ENCODE measurements at regions of chr15 and their contacts with region 1.

Region 1: GRCh38 chr15:39580117-39580484 is 778 bp upstream of the THBS1 start:
- DNase-seq: peak; percentile 60 to 94
- H3K4me3 ChIP-seq: peak overlapping the region; percentile 70
- H3K27ac ChIP-seq: peak overlapping the region; percentile 62
- H3K4me1 ChIP-seq: peaks cover 22% of the 10 kb centered on the region; the same call in 1 of the 2 replicates
- H3K27me3 ChIP-seq: no peaks in the 10 kb centered on the region
- CTCF ChIP-seq: peak; percentile 86

Region 2: DNA sequence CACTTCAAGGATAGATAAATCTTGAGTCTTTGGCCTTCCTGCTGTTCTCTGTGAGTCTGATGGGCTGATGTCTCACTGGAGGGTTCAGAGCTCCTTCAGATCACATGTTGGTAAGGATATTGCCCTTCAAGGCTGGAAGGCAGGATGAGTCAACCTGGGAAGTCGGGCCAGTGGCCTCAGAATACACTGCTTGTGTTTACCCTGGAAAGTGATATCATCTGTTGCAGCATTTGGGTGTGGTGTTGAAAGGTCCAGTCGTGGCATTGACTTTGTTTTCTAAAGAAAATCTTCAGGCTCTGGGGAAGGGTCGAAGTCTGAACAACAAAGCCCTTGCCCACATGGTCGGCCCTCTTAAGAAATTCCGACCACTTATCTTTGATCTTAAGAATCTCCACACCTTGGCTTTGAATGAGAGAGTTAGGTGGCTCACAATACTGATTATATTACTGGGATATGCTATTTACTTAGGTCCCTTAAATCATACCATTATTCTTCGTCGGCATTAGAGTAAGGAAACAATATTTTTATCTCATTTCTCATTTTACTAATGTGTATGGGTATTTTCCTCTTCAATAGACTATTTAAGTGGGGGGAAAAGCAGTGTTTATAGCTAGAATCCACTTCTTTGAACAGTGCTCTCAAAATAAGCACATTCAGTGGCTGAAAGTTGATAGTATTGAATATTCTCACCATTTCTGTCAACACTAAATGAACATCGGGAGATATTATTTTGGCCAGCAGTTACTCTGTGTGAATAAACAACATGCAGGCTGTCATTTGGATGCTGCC is 711.6 kb before region 1 on chr15:
- CTCF ChIA-PET with region 1: interaction called, 3 read pairs
- POLR2A ChIA-PET with region 1: no interaction called
- intact Hi-C with region 1: loop called (anchors 2 kb)
- DNase-seq: peak; percentile 72 to 80
- H3K4me3 ChIP-seq: no peak overlapping the region
- H3K27ac ChIP-seq: peak overlapping the region; percentile 40
- H3K4me1 ChIP-seq: peaks cover 7% of the 10 kb centered on the region
- H3K27me3 ChIP-seq: no peaks in the 10 kb centered on the region
- CTCF ChIP-seq: no peak

Region 3: GRCh38 chr15:39171944-39172368 is 408.1 kb before region 1 on chr15:
- CTCF ChIA-PET with region 1: interaction called, 16 read pairs
- POLR2A ChIA-PET with region 1: interaction called, 35 read pairs
- intact Hi-C with region 1: loop called (anchors 1 kb)
- DNase-seq: peak; percentile 85 to 88
- H3K4me3 ChIP-seq: no peak overlapping the region
- H3K27ac ChIP-seq: peak overlapping the region; percentile 34; the same call in 1 of the 2 replicates
- H3K4me1 ChIP-seq: peaks cover 12% of the 10 kb centered on the region
- H3K27me3 ChIP-seq: no peaks in the 10 kb centered on the region
- CTCF ChIP-seq: peak; percentile 66

Region 4: GRCh38 chr15:39213385-39213840 is 366.7 kb before region 1 on chr15:
- CTCF ChIA-PET with region 1: interaction called, 5 read pairs
- POLR2A ChIA-PET with region 1: interaction called, 36 read pairs
- intact Hi-C with region 1: loop called (anchors 1 kb)
- DNase-seq: peak; percentile 85 to 97
- H3K4me3 ChIP-seq: 0 out of 2 replicates have a peak overlapping the region, but pooled peaks have one; percentile 26
- H3K27ac ChIP-seq: peak overlapping the region; percentile 77
- H3K4me1 ChIP-seq: peaks cover 16% of the 10 kb centered on the region
- H3K27me3 ChIP-seq: no peaks in the 10 kb centered on the region
- CTCF ChIP-seq: no peak

Region 5: GRCh38 chr15:39363761-39364586 is 216.1 kb before region 1 on chr15:
- CTCF ChIA-PET with region 1: no interaction called
- POLR2A ChIA-PET with region 1: interaction called, 10 read pairs
- intact Hi-C with region 1: no loop called
- DNase-seq: peak in 1 of 2 experiments; percentile 39
- H3K4me3 ChIP-seq: no peak overlapping the region
- H3K27ac ChIP-seq: 0 out of 2 replicates have a peak overlapping the region, but pooled peaks have one; percentile 19
- H3K4me1 ChIP-seq: peaks cover 16% of the 10 kb centered on the region
- H3K27me3 ChIP-seq: no peaks in the 10 kb centered on the region
- CTCF ChIP-seq: no peak

Region 6: GRCh38 chr15:39429898-39430357 is 150.2 kb before region 1 on chr15:
- CTCF ChIA-PET with region 1: interaction called, 3 read pairs
- POLR2A ChIA-PET with region 1: interaction called, 6 read pairs
- intact Hi-C with region 1: loop called (anchors 10 kb)
- DNase-seq: peak; percentile 33 to 65
- H3K4me3 ChIP-seq: no peak overlapping the region
- H3K27ac ChIP-seq: no peak overlapping the region
- H3K4me1 ChIP-seq: peaks cover 7% of the 10 kb centered on the region
- H3K27me3 ChIP-seq: no peaks in the 10 kb centered on the region
- CTCF ChIP-seq: no peak

Region 7: GRCh38 chr15:40072216-40072990 is 492.3 kb after region 1 on chr15:
- CTCF ChIA-PET with region 1: no interaction called
- POLR2A ChIA-PET with region 1: no interaction called
- intact Hi-C with region 1: no loop called
- DNase-seq: no peak
- H3K4me3 ChIP-seq: no peak overlapping the region
- H3K27ac ChIP-seq: no peak overlapping the region
- H3K4me1 ChIP-seq: peaks cover 39% of the 10 kb centered on the region
- H3K27me3 ChIP-seq: no peaks in the 10 kb centered on the region
- CTCF ChIP-seq: no peak

Measured in PC-9 (cell line).